IMR-90 (cell line): ENCODE measurements at regions of chr4 and their contacts with region 1.

Region 1: GRCh38 chr4:176319704-176320339 is at the start of gene SPCS3:
- DNase-seq: peak; percentile 91
- ATAC-seq: peak; percentile 97
- H3K4me3 ChIP-seq: peak within 1 kb of the TSS; percentile 96
- H3K27ac ChIP-seq: peak within 1 kb of the TSS; percentile 98
- H3K4me1 ChIP-seq: no peaks in the 10 kb centered on the region
- H3K27me3 ChIP-seq: no peaks in the 10 kb centered on the region
- CTCF ChIP-seq: no peak
- POLR2A ChIP-seq: peak; percentile 77
- RAD21 ChIP-seq: no peak
- total RNA-seq, gene SPCS3: 77.4 and 131 TPM in 2 replicates

Region 2: GRCh38 chr4:176013476-176014247 is 306.2 kb before region 1 on chr4:
- CTCF ChIA-PET with region 1: no interaction called
- POLR2A ChIA-PET with region 1: no interaction called
- dilution Hi-C with region 1: no loop called
- in situ Hi-C with region 1: no loop called
- intact Hi-C with region 1: no loop called
- DNase-seq: no peak
- ATAC-seq: no peak
- H3K4me3 ChIP-seq: no peak overlapping the region
- H3K27ac ChIP-seq: no peak overlapping the region
- H3K4me1 ChIP-seq: no peaks in the 10 kb centered on the region
- H3K27me3 ChIP-seq: no peaks in the 10 kb centered on the region
- CTCF ChIP-seq: no peak
- POLR2A ChIP-seq: no peak
- RAD21 ChIP-seq: no peak

Region 3: GRCh38 chr4:176185067-176185466 is 134.8 kb before region 1 on chr4:
- CTCF ChIA-PET with region 1: no interaction called
- POLR2A ChIA-PET with region 1: no interaction called
- dilution Hi-C with region 1: no loop called
- in situ Hi-C with region 1: no loop called
- intact Hi-C with region 1: loop called (anchors 2 kb)
- DNase-seq: peak; percentile 92
- ATAC-seq: peak; percentile 98
- H3K4me3 ChIP-seq: no peak overlapping the region
- H3K27ac ChIP-seq: no peak overlapping the region
- H3K4me1 ChIP-seq: peaks cover 9% of the 10 kb centered on the region; the same call in 1 of the 2 replicates
- H3K27me3 ChIP-seq: no peaks in the 10 kb centered on the region
- CTCF ChIP-seq: no peak
- POLR2A ChIP-seq: no peak
- RAD21 ChIP-seq: no peak

Region 4: GRCh38 chr4:176195184-176195978 is 124.4 kb before region 1 on chr4 and contains the start of gene SPATA4:
- CTCF ChIA-PET with region 1: no interaction called
- POLR2A ChIA-PET with region 1: no interaction called
- dilution Hi-C with region 1: no loop called
- in situ Hi-C with region 1: no loop called
- intact Hi-C with region 1: loop called (anchors 2 kb)
- DNase-seq: peak; percentile 89
- ATAC-seq: peak; percentile 97
- H3K4me3 ChIP-seq: peak within 1 kb of the TSS; percentile 58
- H3K27ac ChIP-seq: peak within 1 kb of the TSS; percentile 88
- H3K4me1 ChIP-seq: peaks cover 7% of the 10 kb centered on the region
- H3K27me3 ChIP-seq: no peaks in the 10 kb centered on the region
- CTCF ChIP-seq: no peak
- POLR2A ChIP-seq: peak; percentile 81
- RAD21 ChIP-seq: no peak
- total RNA-seq, gene SPATA4: under 0.01 and 0.28 TPM in 2 replicates

Region 5: GRCh38 chr4:176261481-176261880 is 58.3 kb before region 1 on chr4:
- CTCF ChIA-PET with region 1: no interaction called
- POLR2A ChIA-PET with region 1: interaction called, 16 read pairs
- dilution Hi-C with region 1: no loop called
- in situ Hi-C with region 1: no loop called
- intact Hi-C with region 1: no loop called
- DNase-seq: peak; percentile 80
- ATAC-seq: peak; percentile 50
- H3K4me3 ChIP-seq: no peak overlapping the region
- H3K27ac ChIP-seq: no peak overlapping the region
- H3K4me1 ChIP-seq: peaks cover 17% of the 10 kb centered on the region
- H3K27me3 ChIP-seq: no peaks in the 10 kb centered on the region
- CTCF ChIP-seq: no peak
- POLR2A ChIP-seq: no peak
- RAD21 ChIP-seq: no peak

Region 6: GRCh38 chr4:176270669-176271068 is 49.2 kb before region 1 on chr4:
- CTCF ChIA-PET with region 1: no interaction called
- POLR2A ChIA-PET with region 1: interaction called, 3 read pairs
- dilution Hi-C with region 1: no loop called
- in situ Hi-C with region 1: no loop called
- intact Hi-C with region 1: loop called (anchors 2 kb)
- DNase-seq: peak; percentile 100
- ATAC-seq: peak; percentile 98
- H3K4me3 ChIP-seq: no peak overlapping the region
- H3K27ac ChIP-seq: peak overlapping the region; percentile 61; the same call in 1 of the 2 replicates
- H3K4me1 ChIP-seq: peaks cover 6% of the 10 kb centered on the region
- H3K27me3 ChIP-seq: no peaks in the 10 kb centered on the region
- CTCF ChIP-seq: no peak
- POLR2A ChIP-seq: 0 out of 2 replicates have a peak, but pooled peaks have one; percentile 19
- RAD21 ChIP-seq: peak; percentile 13; the same call in 1 of the 2 replicates

Region 7: GRCh38 chr4:177322266-177322665 is 1002.4 kb after region 1 on chr4:
- CTCF ChIA-PET with region 1: no interaction called
- POLR2A ChIA-PET with region 1: no interaction called
- dilution Hi-C with region 1: no loop called
- in situ Hi-C with region 1: no loop called
- intact Hi-C with region 1: no loop called
- DNase-seq: peak; percentile 55
- ATAC-seq: peak; percentile 81
- H3K4me3 ChIP-seq: no peak overlapping the region; the same call in 1 of the 2 replicates
- H3K27ac ChIP-seq: no peak overlapping the region
- H3K4me1 ChIP-seq: peaks cover 5% of the 10 kb centered on the region; the same call in 1 of the 2 replicates
- H3K27me3 ChIP-seq: no peaks in the 10 kb centered on the region
- CTCF ChIP-seq: no peak
- POLR2A ChIP-seq: no peak
- RAD21 ChIP-seq: no peak